CD14-positive monocyte (primary cell): ENCODE measurements at regions of chr1 and their contacts with region 1.

Region 1: DNA sequence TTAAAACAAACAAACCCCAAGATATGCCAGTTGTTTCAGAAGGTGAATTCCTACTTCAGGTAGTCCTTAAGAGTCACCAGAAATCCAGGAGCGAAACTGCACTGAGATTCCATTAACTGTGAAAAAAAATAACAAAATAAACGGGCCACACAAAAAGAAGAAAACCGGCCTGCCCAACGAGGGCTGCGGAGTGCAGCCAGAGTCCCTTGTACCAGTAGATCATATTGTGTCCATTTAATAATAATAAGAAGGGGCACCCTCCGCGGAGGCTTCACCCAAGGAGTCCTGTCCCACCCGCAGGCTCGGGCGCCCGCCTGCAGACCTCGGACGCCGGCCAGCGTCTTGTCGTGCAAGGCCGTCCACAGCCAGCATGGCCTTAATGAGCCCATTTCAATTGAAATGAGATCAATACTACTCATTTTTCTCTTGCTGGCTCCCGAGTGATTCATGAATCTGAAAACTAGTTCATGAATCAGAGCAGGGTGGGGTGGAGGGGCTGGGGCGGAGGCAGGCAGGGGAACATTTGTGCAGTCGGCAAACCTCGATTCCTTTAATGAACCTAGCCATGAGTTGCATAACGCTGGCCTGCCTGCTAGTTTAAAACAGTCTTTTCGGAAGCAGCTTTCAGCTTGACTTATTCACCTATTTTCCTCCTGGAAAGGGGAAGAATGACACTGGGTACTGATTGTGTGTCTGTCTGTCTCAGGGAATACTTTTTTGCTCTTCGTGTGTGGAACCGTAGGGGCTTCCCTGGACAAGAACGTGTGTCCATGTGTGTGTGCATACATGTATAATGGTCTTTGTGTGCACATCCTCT is 113.1 kb upstream of the IRF2BP2 start:
- DNase-seq: peak; percentile 87 to 95 (median 94)
- H3K4me3 ChIP-seq: peak overlapping the region in 1 of 3 experiments; percentile 61
- H3K4me3 Mint-ChIP-seq: peak overlapping the region; percentile 65 to 75
- H3K27ac ChIP-seq: peak overlapping the region; percentile 89 to 95
- H3K27ac Mint-ChIP-seq: peak overlapping the region; percentile 93 to 98 (median 97)
- H3K4me1 ChIP-seq: peaks cover 92 to 93% of the 10 kb centered on the region in 2 donors
- H3K4me1 Mint-ChIP-seq: peaks cover 96% of the 10 kb centered on the region
- H3K27me3 ChIP-seq: no peaks in the 10 kb centered on the region
- H3K27me3 Mint-ChIP-seq: peaks cover 0 to 4% (median 2%) of the 10 kb centered on the region in 3 donors
- CTCF ChIP-seq: no peak

Region 2: DNA sequence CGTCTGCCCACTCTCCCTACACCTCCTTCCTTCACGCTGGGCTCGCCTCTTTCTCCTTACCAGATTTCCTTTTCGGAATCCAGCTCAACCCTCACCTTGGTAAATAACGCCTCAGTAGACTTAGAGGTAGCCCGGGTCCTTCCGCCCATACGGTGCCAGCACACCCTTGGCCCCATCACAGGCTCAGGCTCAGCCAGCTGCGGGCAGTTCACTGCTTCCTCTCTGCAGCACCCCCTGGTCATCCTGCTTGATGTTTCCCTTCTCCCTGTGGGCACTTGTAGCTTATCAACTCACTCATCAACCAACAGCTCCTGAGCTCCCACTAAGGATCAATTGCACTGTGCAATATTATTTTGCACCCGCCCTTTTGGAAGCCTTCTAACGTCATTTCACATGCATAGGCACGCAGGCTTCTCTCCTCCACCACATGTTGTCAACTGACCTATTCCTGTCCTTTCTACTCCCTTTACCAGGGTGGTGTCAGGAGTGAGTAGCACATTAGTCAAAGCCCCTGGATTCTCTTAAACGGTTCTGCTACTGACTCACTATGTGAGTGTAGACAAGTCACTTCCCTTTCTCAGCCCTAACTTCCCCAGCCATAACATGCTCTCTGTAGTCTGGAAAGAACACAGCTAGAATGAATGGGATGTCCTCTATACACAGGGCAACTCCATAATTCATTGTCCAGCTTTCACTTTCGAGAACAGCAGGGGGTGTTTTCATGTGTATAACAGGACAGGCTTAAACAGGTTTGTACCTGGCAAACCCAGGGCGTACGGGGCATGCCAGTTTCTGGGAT is 66.1 kb before region 1 on chr1:
- intact Hi-C with region 1: loop called in 1 of 2 experiments (anchors 5 kb)
- DNase-seq: peak; percentile 98 to 100 (median 99)
- H3K4me3 ChIP-seq: peak overlapping the region in 1 of 3 experiments; percentile 42
- H3K4me3 Mint-ChIP-seq: peak overlapping the region; percentile 65 to 79
- H3K27ac ChIP-seq: peak overlapping the region; percentile 96 to 98
- H3K27ac Mint-ChIP-seq: peak overlapping the region; percentile 98 to 100 (median 99)
- H3K4me1 ChIP-seq: peaks cover 33 to 52% of the 10 kb centered on the region in 2 donors
- H3K4me1 Mint-ChIP-seq: peaks cover 57% of the 10 kb centered on the region
- H3K27me3 ChIP-seq: no peaks in the 10 kb centered on the region
- H3K27me3 Mint-ChIP-seq: no peaks in the 10 kb centered on the region
- CTCF ChIP-seq: no peak

Region 3: GRCh38 chr1:234683861-234684632 is 39.1 kb before region 1 on chr1:
- intact Hi-C with region 1: loop called in 1 of 2 experiments (anchors 5 kb)
- DNase-seq: peak; percentile 91 to 97 (median 96)
- H3K4me3 ChIP-seq: peak overlapping the region in 1 of 3 experiments; percentile 11
- H3K4me3 Mint-ChIP-seq: peak overlapping the region in 1 of 2 donors; percentile 12
- H3K27ac ChIP-seq: peak overlapping the region; percentile 58 to 76
- H3K27ac Mint-ChIP-seq: peak overlapping the region; percentile 87 to 93 (median 91)
- H3K4me1 ChIP-seq: peaks cover 19 to 24% of the 10 kb centered on the region in 2 donors
- H3K4me1 Mint-ChIP-seq: peaks cover 19% of the 10 kb centered on the region
- H3K27me3 ChIP-seq: no peaks in the 10 kb centered on the region
- H3K27me3 Mint-ChIP-seq: peaks cover 0 to 3% (median 0%) of the 10 kb centered on the region in 3 donors
- CTCF ChIP-seq: no peak

Region 4: DNA sequence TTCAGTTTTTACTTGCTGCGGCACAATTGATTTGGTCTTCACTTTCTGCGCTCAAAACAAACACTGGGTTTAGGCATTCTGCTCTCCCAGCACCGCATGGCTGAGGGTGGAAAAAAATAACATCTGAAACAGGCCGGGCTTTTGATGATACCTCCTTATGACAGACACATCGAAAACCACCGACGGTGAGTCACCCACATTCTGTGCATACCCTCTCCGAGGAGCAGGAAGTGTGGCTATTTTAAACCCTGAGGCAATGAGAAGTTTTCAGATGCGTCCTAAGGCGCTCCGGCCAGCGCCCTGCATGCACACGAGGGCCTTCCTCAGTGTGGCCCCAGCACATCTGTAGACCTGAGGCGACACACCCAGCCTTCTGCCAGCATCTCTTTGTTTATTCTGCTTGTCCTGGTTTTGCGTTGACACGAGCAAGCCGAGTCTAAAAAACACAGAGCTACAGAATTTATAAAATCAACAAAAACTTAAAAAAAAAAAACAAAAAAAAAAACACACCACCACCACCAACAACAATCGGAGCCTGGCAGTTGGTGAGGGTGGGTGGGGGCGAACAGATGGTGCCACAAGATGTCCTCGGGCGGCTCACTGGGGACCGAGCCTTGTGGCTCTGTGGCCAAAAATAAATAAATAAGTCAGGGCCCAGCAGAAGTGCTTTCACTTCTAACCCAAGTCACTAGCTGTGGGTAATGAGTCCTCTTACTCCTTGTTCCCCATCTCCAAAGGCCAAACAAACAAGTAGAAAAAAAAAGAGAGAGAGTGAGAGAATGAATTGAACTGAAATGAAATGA is 49.4 kb after region 1 on chr1:
- intact Hi-C with region 1: loop called in 1 of 2 experiments (anchors 5 kb)
- DNase-seq: peak; percentile 98 to 100 (median 99)
- H3K4me3 ChIP-seq: peak overlapping the region in 1 of 3 experiments; percentile 17
- H3K4me3 Mint-ChIP-seq: peak overlapping the region; percentile 52 to 75
- H3K27ac ChIP-seq: peak overlapping the region; percentile 94 to 98
- H3K27ac Mint-ChIP-seq: peak overlapping the region in 4 of 7 donors; percentile 96 to 100 (median 99)
- H3K4me1 ChIP-seq: peaks cover 88 to 92% of the 10 kb centered on the region in 2 donors
- H3K4me1 Mint-ChIP-seq: peaks cover 51% of the 10 kb centered on the region
- H3K27me3 ChIP-seq: no peaks in the 10 kb centered on the region
- H3K27me3 Mint-ChIP-seq: no peaks in the 10 kb centered on the region
- CTCF ChIP-seq: no peak

Region 5: GRCh38 chr1:234842726-234843641 is 119.9 kb after region 1 on chr1:
- intact Hi-C with region 1: loop called in 1 of 2 experiments (anchors 5 kb)
- DNase-seq: peak in 2 of 3 donors; percentile 44 to 79
- H3K4me3 ChIP-seq: peak overlapping the region in 1 of 3 experiments; percentile 41
- H3K4me3 Mint-ChIP-seq: peak overlapping the region; percentile 64 to 65
- H3K27ac ChIP-seq: peak overlapping the region; percentile 98 to 100
- H3K27ac Mint-ChIP-seq: peak overlapping the region; percentile 97 to 99 (median 98)
- H3K4me1 ChIP-seq: peaks cover 78 to 91% of the 10 kb centered on the region in 2 donors
- H3K4me1 Mint-ChIP-seq: peaks cover 95% of the 10 kb centered on the region
- H3K27me3 ChIP-seq: no peaks in the 10 kb centered on the region
- H3K27me3 Mint-ChIP-seq: no peaks in the 10 kb centered on the region
- CTCF ChIP-seq: no peak

Region 6: GRCh38 chr1:234933475-234933874 is 210.4 kb after region 1 on chr1:
- intact Hi-C with region 1: loop called in 1 of 2 experiments (anchors 5 kb)
- DNase-seq: peak; percentile 90 to 94 (median 92)
- H3K4me3 ChIP-seq: no peak overlapping the region
- H3K4me3 Mint-ChIP-seq: peak overlapping the region in 1 of 2 donors; percentile 55
- H3K27ac ChIP-seq: peak overlapping the region; percentile 95 to 98
- H3K27ac Mint-ChIP-seq: peak overlapping the region; percentile 97 to 99 (median 99)
- H3K4me1 ChIP-seq: peaks cover 57 to 85% of the 10 kb centered on the region in 2 donors
- H3K4me1 Mint-ChIP-seq: peaks cover 65% of the 10 kb centered on the region
- H3K27me3 ChIP-seq: no peaks in the 10 kb centered on the region
- H3K27me3 Mint-ChIP-seq: no peaks in the 10 kb centered on the region
- CTCF ChIP-seq: no peak

Region 7: GRCh38 chr1:235075188-235075926 is 352.2 kb after region 1 on chr1:
- intact Hi-C with region 1: loop called in 1 of 2 experiments (anchors 10 kb)
- DNase-seq: peak; percentile 66 to 70 (median 67)
- H3K4me3 ChIP-seq: no peak overlapping the region
- H3K4me3 Mint-ChIP-seq: peak overlapping the region in 1 of 2 donors; percentile 48
- H3K27ac ChIP-seq: peak overlapping the region in 1 of 2 donors; percentile 80
- H3K27ac Mint-ChIP-seq: peak overlapping the region; percentile 73 to 95 (median 91)
- H3K4me1 ChIP-seq: peaks cover 64 to 77% of the 10 kb centered on the region in 2 donors
- H3K4me1 Mint-ChIP-seq: peaks cover 39% of the 10 kb centered on the region
- H3K27me3 ChIP-seq: no peaks in the 10 kb centered on the region
- H3K27me3 Mint-ChIP-seq: peaks cover 0 to 2% (median 0%) of the 10 kb centered on the region in 3 donors
- CTCF ChIP-seq: no peak